Right ventricle myocardium inferior (tissue), 1 donor: ENCODE measurements at regions of chr5 and their contacts with region 1.

Region 1: GRCh38 chr5:55534436-55535198 is at the start of gene PLPP1:
- DNase-seq: peak; percentile 93
- ATAC-seq: peak; percentile 97
- total RNA-seq, gene PLPP1: 74.1 TPM

Region 2: GRCh38 chr5:55418994-55419968 is 115.3 kb before region 1 on chr5:
- intact Hi-C with region 1: loop called (anchors 5 kb)
- DNase-seq: no peak
- ATAC-seq: peak; percentile 12

Region 3: DNA sequence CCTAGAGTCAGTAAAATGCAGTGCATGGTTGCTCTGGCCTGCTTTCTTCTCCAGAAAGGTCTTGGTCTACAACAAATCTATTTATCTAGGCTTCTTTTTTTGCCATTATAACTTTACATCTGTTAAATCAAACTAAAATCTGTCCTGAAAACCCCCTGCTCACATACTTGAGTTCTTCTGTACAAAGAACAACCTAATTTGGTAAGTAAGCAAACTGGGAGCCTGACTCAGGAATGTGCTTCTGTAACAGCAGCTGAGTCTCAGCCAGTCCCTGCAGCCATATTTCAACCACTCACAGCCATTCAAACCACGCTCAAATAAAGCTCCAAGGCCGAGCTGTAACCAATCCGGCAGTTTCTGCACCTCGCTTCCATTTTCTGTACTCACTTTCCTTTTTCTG is 95.6 kb before region 1 on chr5:
- intact Hi-C with region 1: loop called (anchors 5 kb)
- DNase-seq: no peak
- ATAC-seq: peak; percentile 16

Region 4: DNA sequence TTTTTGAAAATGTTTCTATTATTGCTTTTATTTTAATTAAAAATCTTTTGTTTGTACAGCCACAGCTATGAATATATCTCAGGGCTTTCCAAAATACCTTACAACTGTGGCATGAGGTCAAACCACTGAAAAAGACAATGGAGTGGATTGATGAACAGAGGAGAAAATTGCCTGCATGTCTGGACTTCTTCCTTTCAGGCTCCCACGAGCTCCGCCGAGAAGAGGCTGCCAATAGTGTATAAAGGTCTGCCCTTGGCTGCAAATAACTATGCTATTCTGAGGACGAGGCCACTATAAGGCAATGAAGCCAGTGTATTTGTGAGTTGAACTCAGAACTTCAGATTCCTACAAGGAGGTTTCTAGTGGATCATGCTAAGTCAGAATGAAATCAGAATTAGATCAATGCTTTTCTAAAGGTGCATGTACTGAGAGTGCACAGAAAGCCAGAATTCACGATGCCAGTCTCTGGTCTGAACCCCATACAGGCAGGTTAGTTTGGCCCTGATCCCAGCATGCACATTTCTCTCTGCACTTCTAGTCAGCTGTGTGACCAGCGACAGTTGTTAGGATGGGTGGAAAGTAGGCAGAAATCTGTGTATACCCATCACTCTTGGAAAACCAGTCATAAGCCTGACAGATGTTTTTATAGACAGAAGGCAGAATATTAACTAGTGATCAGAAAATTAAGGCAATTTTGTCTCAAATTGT is 42.9 kb after region 1 on chr5:
- intact Hi-C with region 1: loop called (anchors 2 kb)
- DNase-seq: peak; percentile 75
- ATAC-seq: peak; percentile 92

Region 5: DNA sequence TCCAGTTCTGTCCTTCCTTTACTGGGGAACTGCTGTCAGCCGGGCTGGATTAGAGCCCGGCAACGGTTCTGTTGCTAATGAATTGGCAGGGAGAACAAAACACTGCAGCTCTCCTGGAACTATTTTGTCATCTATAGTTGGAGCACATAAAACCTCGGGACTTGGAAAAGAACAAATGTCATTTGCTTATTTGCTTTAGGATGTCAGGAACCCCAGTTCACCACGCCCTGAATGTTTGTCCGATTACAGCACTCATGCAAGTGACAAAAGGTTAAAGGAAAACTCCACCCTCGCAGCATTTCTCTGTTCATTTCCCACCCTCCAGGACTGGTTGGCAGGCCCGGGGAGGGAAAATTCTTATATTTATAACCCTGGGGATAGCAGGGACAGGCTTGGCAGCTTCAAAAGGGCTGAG is 66.6 kb after region 1 on chr5:
- intact Hi-C with region 1: loop called (anchors 1 kb)
- DNase-seq: peak; percentile 86
- ATAC-seq: peak; percentile 88

Region 6: GRCh38 chr5:55636683-55637082 is 102.1 kb after region 1 on chr5:
- intact Hi-C with region 1: loop called (anchors 10 kb)
- DNase-seq: no peak
- ATAC-seq: peak; percentile 70

Region 7: DNA sequence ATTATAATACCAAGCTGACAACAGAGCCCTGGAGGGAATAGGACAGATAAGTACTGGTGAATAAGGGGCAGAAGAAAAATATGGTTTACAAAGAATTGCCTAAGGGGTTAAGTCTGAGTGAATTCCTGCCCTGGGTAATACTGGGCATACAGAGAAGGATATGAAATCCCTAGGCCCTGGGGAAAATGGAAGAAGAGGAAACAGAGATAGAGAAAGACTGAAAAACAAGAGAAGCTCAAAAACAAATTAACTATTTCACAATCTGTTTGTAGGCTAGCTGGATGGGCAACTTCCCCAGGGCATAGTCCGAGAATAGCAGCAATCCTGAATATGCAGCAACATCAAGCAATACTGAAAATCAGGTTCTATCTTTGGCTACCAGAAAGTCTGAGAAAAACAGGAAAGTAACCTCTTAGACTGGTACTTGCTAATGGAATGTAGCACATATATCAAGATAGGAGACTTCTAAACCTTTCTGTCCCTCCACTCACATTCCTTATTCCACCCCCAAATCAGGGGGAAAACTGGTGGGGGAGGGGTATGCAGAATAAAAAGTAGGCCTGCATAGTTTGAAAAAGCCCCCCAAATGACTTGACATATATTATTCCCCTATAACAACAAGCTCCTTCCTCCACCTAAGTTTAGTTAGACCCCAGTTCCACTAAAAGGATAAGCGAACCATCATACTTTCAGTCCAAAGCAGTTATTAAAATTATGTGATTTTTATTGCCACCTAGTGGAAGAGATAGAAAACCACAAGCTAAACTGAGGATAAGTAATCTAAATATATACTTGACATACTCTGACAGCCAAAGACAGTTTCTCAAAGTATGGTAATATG is 156.9 kb after region 1 on chr5:
- intact Hi-C with region 1: loop called (anchors 5 kb)
- DNase-seq: no peak
- ATAC-seq: peak; percentile 73